Activated CD4-positive, alpha-beta T cell treated with anti-CD3 and anti-CD28 coated beads for 36 hours (primary cell): ENCODE measurements at regions of chr1 and their contacts with region 1.

Region 1: DNA sequence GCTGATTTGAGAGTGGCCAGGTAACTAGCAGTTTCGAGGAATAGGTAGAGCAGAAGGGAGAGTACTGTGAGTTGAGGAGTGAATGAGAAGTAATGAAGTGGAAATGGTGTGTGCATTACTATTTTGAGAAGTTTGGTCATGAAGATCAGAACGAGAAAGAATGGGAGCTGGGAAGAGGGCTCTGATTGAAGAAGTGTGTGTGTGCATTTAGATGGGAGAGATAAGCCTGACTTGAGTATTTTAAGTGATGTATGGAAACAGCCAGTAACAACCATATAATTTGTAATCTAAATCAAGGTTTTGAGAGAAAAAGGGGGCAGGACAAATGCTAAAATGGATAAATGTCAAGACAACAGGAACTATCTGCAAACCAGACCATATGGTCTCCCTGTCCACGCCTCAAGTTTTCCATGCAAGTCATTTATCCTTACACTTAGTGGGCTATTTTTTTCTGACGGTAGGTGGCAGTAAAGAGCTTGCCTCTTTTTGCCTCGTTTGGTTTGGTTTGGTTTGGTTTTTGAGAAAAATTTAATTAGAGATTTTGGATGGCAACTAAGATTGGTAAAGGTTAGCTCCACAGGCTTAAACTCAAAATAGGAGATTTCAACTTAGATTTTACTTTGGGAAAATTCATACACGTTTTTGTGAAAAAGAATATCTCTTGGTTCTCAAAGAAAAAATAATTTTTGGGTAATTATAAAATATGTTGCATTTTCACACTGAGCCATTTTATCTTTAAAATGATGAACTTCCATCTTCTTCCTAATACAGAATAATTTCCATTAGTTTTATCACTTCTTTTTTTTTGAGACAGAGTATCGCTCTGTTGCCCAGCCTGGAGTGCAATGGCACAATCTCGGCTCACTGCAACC is 9.5 kb upstream of the B3GALNT2 start:
- DNase-seq: peak; percentile 50
- ATAC-seq: peak; percentile 79
- H3K4me3 Mint-ChIP-seq: no peak overlapping the region
- H3K27ac Mint-ChIP-seq: no peak overlapping the region
- H3K4me1 Mint-ChIP-seq: peaks cover 4% of the 10 kb centered on the region
- H3K27me3 Mint-ChIP-seq: peaks cover 2% of the 10 kb centered on the region

Region 2: GRCh38 chr1:235549351-235550139 is 35.8 kb after region 1 on chr1:
- CTCF ChIA-PET with region 1: no interaction called
- POLR2A ChIA-PET with region 1: no interaction called
- intact Hi-C with region 1: no loop called
- DNase-seq: no peak
- ATAC-seq: no peak
- H3K4me3 Mint-ChIP-seq: no peak overlapping the region
- H3K27ac Mint-ChIP-seq: no peak overlapping the region
- H3K4me1 Mint-ChIP-seq: no peaks in the 10 kb centered on the region
- H3K27me3 Mint-ChIP-seq: no peaks in the 10 kb centered on the region

Region 3: DNA sequence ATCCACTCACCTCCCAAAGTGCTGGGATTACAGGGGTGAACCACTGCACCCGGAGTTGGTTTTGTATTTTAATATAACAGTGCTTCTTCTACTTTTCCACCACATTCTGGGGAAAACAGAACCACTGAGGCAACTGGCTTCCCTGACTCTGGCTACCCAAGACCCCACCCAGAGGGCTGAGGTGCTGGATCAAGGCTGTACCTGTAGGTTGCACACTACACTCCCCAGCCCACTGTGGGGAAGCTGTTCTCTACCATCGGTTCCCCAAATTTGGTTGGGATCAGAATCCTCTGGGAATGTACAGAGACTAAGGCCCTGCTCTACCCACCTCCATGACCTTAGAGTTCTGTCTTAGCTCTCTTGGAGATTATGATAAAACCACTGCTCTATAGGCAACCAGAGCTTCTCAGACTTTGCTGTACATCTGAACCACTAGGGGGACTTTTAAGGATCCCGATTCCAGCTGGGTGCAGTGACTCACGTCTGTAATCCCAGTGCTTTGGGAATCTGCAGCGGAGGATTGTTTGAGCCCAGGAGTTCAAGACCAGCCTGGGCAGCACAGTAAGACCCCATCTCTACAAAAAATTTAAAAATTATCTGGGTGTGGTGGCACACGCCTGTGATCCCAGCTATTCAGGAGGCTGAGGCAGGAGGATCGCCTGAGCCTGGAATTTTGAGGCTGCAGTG is 84.3 kb after region 1 on chr1:
- CTCF ChIA-PET with region 1: interaction called, 9 read pairs
- POLR2A ChIA-PET with region 1: no interaction called
- intact Hi-C with region 1: loop called in 1 of 2 experiments (anchors 5 kb)
- DNase-seq: no peak
- ATAC-seq: no peak
- H3K4me3 Mint-ChIP-seq: no peak overlapping the region
- H3K27ac Mint-ChIP-seq: no peak overlapping the region
- H3K4me1 Mint-ChIP-seq: peaks cover 7% of the 10 kb centered on the region
- H3K27me3 Mint-ChIP-seq: peaks cover 3% of the 10 kb centered on the region

Region 4: GRCh38 chr1:235735621-235736020 is 221.9 kb after region 1 on chr1:
- CTCF ChIA-PET with region 1: interaction called, 5 read pairs
- POLR2A ChIA-PET with region 1: no interaction called
- intact Hi-C with region 1: loop called in 1 of 2 experiments (anchors 1 kb)
- DNase-seq: no peak
- ATAC-seq: peak; percentile 33
- H3K4me3 Mint-ChIP-seq: no peak overlapping the region
- H3K27ac Mint-ChIP-seq: no peak overlapping the region
- H3K4me1 Mint-ChIP-seq: peaks cover 2% of the 10 kb centered on the region
- H3K27me3 Mint-ChIP-seq: no peaks in the 10 kb centered on the region

Region 5: DNA sequence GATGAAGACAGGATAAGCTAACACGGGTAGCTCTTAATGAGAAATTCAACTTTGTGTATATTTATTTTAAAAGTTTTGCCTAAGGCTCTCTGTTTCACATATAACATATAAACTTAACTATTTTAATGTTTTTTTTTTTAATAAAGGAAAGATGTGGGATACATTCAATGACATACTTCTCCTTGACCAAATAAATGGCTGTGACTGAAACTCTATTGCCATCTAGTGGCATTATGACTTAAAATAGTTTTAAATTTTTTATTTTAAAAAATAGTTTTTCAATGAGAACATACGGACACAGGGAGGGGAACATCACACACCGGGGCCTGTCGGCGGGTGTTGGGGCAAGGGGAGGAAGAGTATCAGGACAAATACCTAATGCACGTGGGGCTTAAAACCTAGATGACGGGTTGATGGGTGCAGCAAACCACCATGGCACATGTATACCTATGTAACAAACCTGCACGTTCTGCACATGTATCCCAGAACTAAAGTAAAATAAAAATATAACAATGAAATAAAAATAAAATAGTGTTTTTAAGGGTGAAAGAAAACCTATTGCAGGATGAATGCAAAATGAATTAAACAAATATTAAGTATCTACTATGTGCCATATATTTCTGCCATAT is 269.5 kb after region 1 on chr1:
- CTCF ChIA-PET with region 1: interaction called, 4 read pairs
- POLR2A ChIA-PET with region 1: no interaction called
- intact Hi-C with region 1: loop called (anchors 1 kb)
- DNase-seq: no peak
- ATAC-seq: no peak
- H3K4me3 Mint-ChIP-seq: no peak overlapping the region
- H3K27ac Mint-ChIP-seq: no peak overlapping the region
- H3K4me1 Mint-ChIP-seq: no peaks in the 10 kb centered on the region
- H3K27me3 Mint-ChIP-seq: no peaks in the 10 kb centered on the region

Region 6: GRCh38 chr1:235843461-235843961 is 329.8 kb after region 1 on chr1:
- CTCF ChIA-PET with region 1: interaction called, 3 read pairs
- POLR2A ChIA-PET with region 1: no interaction called
- intact Hi-C with region 1: loop called in 1 of 2 experiments (anchors 5 kb)
- DNase-seq: no peak
- ATAC-seq: peak; percentile 73
- H3K4me3 Mint-ChIP-seq: no peak overlapping the region
- H3K27ac Mint-ChIP-seq: no peak overlapping the region
- H3K4me1 Mint-ChIP-seq: peaks cover 45% of the 10 kb centered on the region
- H3K27me3 Mint-ChIP-seq: no peaks in the 10 kb centered on the region